ENCODE measurements at regions of chr11 and their contacts with region 1.

Region 1: GRCh38 chr11:64924102-64924851 is at the start of gene PPP2R5B:
- DNase-seq: peak; percentile 92
- H3K4me3 Mint-ChIP-seq: peak within 1 kb of the TSS; percentile 87
- H3K27ac Mint-ChIP-seq: peak within 1 kb of the TSS; percentile 93
- H3K4me1 Mint-ChIP-seq: peaks cover 19% of the 10 kb centered on the region
- H3K27me3 Mint-ChIP-seq: no peaks in the 10 kb centered on the region
- total RNA-seq, gene PPP2R5B: 3.3 to 4.6 TPM

Region 2: GRCh38 chr11:64971421-64972233 is 47.4 kb after region 1 on chr11 and contains the start of gene MAJIN:
- CTCF ChIA-PET with region 1: no interaction called
- intact Hi-C with region 1: loop called (anchors 1 kb)
- DNase-seq: peak; percentile 89
- H3K4me3 Mint-ChIP-seq: peak within 1 kb of the TSS; percentile 69
- H3K27ac Mint-ChIP-seq: peak within 1 kb of the TSS; percentile 81
- H3K4me1 Mint-ChIP-seq: peaks cover 41% of the 10 kb centered on the region
- H3K27me3 Mint-ChIP-seq: no peaks in the 10 kb centered on the region
- total RNA-seq, gene MAJIN: 0.29 to 0.37 TPM